Adrenal gland (tissue), 19 donors: ENCODE measurements at regions of chr11 and their contacts with region 1.

Region 1: GRCh38 chr11:82996966-82997606 is 74.6 kb downstream of the RAB30 start:
- DNase-seq: peak in 1 of 7 donors; percentile 40
- H3K4me3 ChIP-seq: no peak overlapping the region
- H3K27ac ChIP-seq: peak overlapping the region in 3 of 5 donors; percentile 38 to 79 (median 61)
- H3K4me1 ChIP-seq: peaks cover 39 to 68% of the 10 kb centered on the region in 2 donors
- H3K27me3 ChIP-seq: no peaks in the 10 kb centered on the region
- CTCF ChIP-seq: no peak
- POLR2A ChIP-seq: no peak

Region 2: DNA sequence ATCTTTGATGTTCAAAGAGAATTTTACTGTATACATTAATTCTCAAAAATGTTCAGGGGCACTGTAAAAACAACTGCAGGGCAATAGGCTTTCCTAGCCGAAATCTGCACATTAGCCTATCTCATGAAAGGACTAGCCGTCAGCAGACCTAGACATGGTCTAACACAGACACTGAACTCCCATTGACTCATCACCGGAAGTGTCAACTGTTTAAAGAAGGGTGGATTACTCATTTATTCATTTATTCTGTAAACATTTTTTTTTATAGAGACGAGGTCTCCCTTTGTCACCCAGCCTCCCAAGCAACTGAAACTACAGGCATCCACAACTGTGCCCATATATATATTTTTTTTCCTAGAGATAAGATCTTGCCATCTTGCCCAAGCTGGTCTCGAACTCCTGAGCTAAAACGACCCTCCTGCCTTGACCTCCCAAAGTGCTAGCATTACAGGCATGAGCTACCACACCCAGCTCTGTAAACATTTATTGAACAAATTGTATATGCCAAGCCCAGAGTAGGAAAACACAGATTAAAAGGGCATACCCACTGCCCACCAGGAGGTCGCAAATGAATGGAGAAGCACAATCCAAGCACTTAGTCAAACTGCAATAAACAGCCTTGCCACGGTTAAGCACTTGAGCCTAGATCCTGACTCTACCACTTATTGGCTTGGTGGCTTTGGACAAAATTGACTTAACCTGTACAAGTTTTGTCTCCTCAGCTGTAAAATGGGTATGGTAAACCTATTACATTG is 48.0 kb after region 1 on chr11:
- intact Hi-C with region 1: loop called in 1 of 2 experiments (anchors 10 kb)
- DNase-seq: peak in 3 of 7 donors; percentile 38 to 49 (median 45)
- H3K4me3 ChIP-seq: no peak overlapping the region
- H3K27ac ChIP-seq: peak overlapping the region in 3 of 5 donors; percentile 24 to 52 (median 45)
- H3K4me1 ChIP-seq: peaks cover 26 to 39% of the 10 kb centered on the region in 2 donors
- H3K27me3 ChIP-seq: no peaks in the 10 kb centered on the region
- CTCF ChIP-seq: no peak
- POLR2A ChIP-seq: peak in 1 of 2 donors; percentile 9